ENCODE measurements at regions of chr15 and their contacts with region 1.

Region 1: GRCh38 chr15:38252481-38253412 is at the start of gene SPRED1:
- DNase-seq: no peak
- ATAC-seq: peak; percentile 9
- H3K4me3 ChIP-seq: peak within 1 kb of the TSS; percentile 57 to 93 (median 79)
- H3K4me3 Mint-ChIP-seq: peak within 1 kb of the TSS; percentile 90
- H3K27ac ChIP-seq: peak within 1 kb of the TSS in 1 of 2 donors; percentile 19
- H3K27ac Mint-ChIP-seq: peak within 1 kb of the TSS; percentile 84
- H3K4me1 ChIP-seq: peaks cover 21 to 28% of the 10 kb centered on the region in 2 donors
- H3K4me1 Mint-ChIP-seq: peaks cover 34% of the 10 kb centered on the region
- H3K27me3 ChIP-seq: peaks cover 0 to 14% (median 4%) of the 10 kb centered on the region in 4 experiments
- H3K27me3 Mint-ChIP-seq: peaks cover 11% of the 10 kb centered on the region
- CTCF ChIP-seq: no peak
- total RNA-seq, gene SPRED1: 1.2 and 2.1 TPM in 2 replicates

Region 2: GRCh38 chr15:36579792-36580431 is 1672.8 kb before region 1 on chr15:
- CTCF ChIA-PET with region 1: no interaction called
- POLR2A ChIA-PET with region 1: no interaction called
- intact Hi-C with region 1: loop called (anchors 1 kb)
- DNase-seq: no peak
- ATAC-seq: no peak
- H3K4me3 ChIP-seq: peak overlapping the region; percentile 83 to 96 (median 89)
- H3K4me3 Mint-ChIP-seq: peak overlapping the region; percentile 95
- H3K27ac ChIP-seq: peak overlapping the region; percentile 85 to 94
- H3K27ac Mint-ChIP-seq: peak overlapping the region; percentile 96
- H3K4me1 ChIP-seq: peaks cover 6 to 7% of the 10 kb centered on the region in 2 donors
- H3K4me1 Mint-ChIP-seq: peaks cover 26% of the 10 kb centered on the region
- H3K27me3 ChIP-seq: no peaks in the 10 kb centered on the region
- H3K27me3 Mint-ChIP-seq: no peaks in the 10 kb centered on the region
- CTCF ChIP-seq: no peak

Region 3: DNA sequence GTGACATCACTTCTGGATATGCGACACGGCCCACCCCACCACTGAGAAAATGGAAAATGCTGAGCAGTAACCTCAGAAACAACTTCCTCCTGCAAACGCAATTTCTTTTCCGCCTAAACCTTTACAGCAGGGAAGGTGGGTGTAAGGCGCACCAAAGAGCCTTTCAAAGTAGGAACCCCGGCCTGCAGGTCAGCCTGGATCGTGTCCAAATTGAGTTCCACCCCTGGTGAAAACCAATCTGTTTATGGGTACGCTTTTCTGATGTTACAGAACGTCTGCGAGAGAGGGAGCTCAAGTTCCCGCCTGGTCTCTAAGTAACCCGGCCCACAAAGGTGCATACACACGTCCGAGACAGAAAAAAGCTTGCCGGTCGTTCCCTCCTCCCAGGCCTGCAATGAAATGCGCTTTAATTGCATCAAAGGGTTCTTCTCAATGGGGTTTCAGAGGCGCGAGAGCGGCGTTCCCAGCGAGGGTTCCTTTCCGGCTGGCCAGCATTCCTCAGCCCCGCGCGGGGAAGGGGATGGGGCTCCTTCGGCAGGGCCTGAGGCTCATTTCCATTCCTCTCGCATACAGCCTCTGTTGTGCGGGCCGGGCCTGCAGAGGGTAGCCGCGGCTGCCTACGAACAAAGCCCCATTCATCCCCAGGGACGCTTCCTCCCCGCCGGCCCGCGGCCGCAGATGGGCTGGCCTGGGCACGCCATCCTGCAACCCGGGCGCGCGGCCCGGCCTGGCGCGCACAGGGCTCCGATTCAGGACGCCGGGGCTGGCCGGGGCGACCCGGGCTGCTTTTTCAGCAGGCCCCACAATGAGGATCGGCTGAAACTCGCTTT is 180.2 kb before region 1 on chr15:
- CTCF ChIA-PET with region 1: interaction called, 4 read pairs
- POLR2A ChIA-PET with region 1: interaction called, 3 read pairs
- intact Hi-C with region 1: loop called (anchors 2 kb)
- DNase-seq: peak; percentile 66
- ATAC-seq: peak; percentile 64
- H3K4me3 ChIP-seq: peak overlapping the region; percentile 36 to 63 (median 55)
- H3K4me3 Mint-ChIP-seq: peak overlapping the region; percentile 90
- H3K27ac ChIP-seq: no peak overlapping the region
- H3K27ac Mint-ChIP-seq: peak overlapping the region; percentile 67
- H3K4me1 ChIP-seq: peaks cover 25 to 37% of the 10 kb centered on the region in 2 donors
- H3K4me1 Mint-ChIP-seq: peaks cover 59% of the 10 kb centered on the region
- H3K27me3 ChIP-seq: peaks cover 0 to 12% (median 0%) of the 10 kb centered on the region in 4 experiments
- H3K27me3 Mint-ChIP-seq: no peaks in the 10 kb centered on the region
- CTCF ChIP-seq: no peak

Region 4: DNA sequence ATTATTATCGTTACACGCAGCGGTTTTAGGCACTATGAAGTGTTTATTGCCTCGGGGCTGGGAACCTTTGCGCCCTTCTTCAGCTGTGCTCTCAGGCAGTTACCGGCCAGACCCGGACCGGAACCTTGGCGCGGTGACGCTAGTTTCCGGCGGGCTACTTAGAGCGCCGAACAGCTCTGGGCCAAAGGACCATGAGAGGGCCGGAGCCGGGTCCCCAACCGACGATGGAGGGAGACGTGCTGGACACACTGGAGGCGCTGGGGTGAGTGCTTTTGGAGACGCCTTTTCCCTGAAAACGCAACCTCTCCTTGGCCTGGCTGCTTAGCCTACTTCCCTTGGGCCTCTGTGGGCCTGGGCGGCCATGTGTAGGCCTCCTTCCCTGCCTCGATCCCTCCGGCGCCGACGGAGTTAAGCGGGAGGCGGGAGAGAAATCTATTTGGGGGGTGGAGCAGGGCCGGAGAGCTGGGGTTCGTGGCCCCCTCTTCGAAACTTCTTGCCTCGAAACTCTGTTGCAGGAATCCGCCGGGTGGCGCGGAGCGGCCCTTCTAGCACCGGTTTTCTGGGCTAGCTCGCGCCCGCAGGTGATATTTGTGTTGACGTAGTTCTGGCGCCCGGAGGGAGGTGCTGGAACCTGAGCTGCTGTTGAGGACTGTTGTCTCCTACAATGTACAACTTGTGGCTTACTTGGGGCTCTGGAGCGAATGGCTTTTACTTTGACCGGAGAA is 201.4 kb after region 1 on chr15 and contains the start of gene FAM98B:
- CTCF ChIA-PET with region 1: no interaction called
- POLR2A ChIA-PET with region 1: no interaction called
- intact Hi-C with region 1: loop called (anchors 5 kb)
- DNase-seq: peak; percentile 91
- ATAC-seq: peak; percentile 86
- H3K4me3 ChIP-seq: peak within 1 kb of the TSS; percentile 69 to 94 (median 86)
- H3K4me3 Mint-ChIP-seq: peak within 1 kb of the TSS; percentile 99
- H3K27ac ChIP-seq: peak within 1 kb of the TSS; percentile 87 to 89
- H3K27ac Mint-ChIP-seq: peak within 1 kb of the TSS; percentile 97
- H3K4me1 ChIP-seq: peaks cover 9% of the 10 kb centered on the region in 2 donors
- H3K4me1 Mint-ChIP-seq: peaks cover 27% of the 10 kb centered on the region
- H3K27me3 ChIP-seq: no peaks in the 10 kb centered on the region
- H3K27me3 Mint-ChIP-seq: peaks cover 10% of the 10 kb centered on the region
- CTCF ChIP-seq: peak; percentile 12
- total RNA-seq, gene FAM98B: 16.6 and 21.5 TPM in 2 replicates